Endothelial cell of umbilical vein (primary cell): ENCODE measurements at regions of chr2 and their contacts with region 1.

Region 1: GRCh38 chr2:209380293-209380692 is 43.6 kb upstream of the MAP2 start:
- DNase-seq: no peak
- H3K4me3 ChIP-seq: no peak overlapping the region
- H3K27ac ChIP-seq: no peak overlapping the region
- H3K4me1 ChIP-seq: peaks cover 9% of the 10 kb centered on the region
- H3K27me3 ChIP-seq: no peaks in the 10 kb centered on the region
- CTCF ChIP-seq: no peak
- POLR2A ChIP-seq: no peak

Region 2: GRCh38 chr2:209368900-209369299 is 11.4 kb before region 1 on chr2:
- CTCF ChIA-PET with region 1: interaction called, 11 read pairs
- POLR2A ChIA-PET with region 1: no interaction called
- dilution Hi-C with region 1: no loop called
- intact Hi-C with region 1: no loop called
- DNase-seq: peak; percentile 96
- H3K4me3 ChIP-seq: no peak overlapping the region
- H3K27ac ChIP-seq: peak overlapping the region; percentile 4
- H3K4me1 ChIP-seq: peaks cover 23% of the 10 kb centered on the region
- H3K27me3 ChIP-seq: no peaks in the 10 kb centered on the region
- CTCF ChIP-seq: no peak
- POLR2A ChIP-seq: no peak